ENCODE measurements at regions of chr12 and their contacts with region 1.

Region 1: DNA sequence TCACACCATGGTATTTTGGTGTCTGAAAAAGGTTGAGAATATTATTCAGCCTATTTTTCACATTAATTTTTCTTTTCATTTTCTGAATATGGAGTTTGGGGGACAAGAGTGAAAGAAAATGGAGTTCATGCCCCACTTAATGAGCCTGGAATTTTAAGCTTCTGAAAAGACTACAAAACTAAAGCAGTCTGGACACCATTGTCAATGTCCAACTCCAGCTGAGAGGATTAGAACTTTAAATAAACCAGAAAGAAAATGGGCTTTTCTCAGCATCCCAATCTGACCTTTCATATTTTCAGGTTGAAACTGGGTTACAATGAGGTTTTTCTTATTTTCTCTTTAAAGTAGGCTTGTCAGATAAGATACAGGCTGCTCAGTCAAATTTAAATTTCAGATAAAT is 207.7 kb downstream of the SLC6A15 start:
- DNase-seq: no peak
- H3K4me3 ChIP-seq: no peak overlapping the region
- H3K27ac ChIP-seq: no peak overlapping the region
- H3K4me1 ChIP-seq: no peaks in the 10 kb centered on the region
- H3K27me3 ChIP-seq: no peaks in the 10 kb centered on the region
- CTCF ChIP-seq: no peak
- POLR2A ChIP-seq: no peak

Region 2: GRCh38 chr12:84719997-84720396 is 15.1 kb after region 1 on chr12:
- CTCF ChIA-PET with region 1: interaction called, 4 read pairs
- POLR2A ChIA-PET with region 1: no interaction called
- dilution Hi-C with region 1: no loop called
- intact Hi-C with region 1: loop called (anchors 1 kb)
- DNase-seq: no peak
- H3K4me3 ChIP-seq: no peak overlapping the region
- H3K27ac ChIP-seq: no peak overlapping the region
- H3K4me1 ChIP-seq: no peaks in the 10 kb centered on the region
- H3K27me3 ChIP-seq: no peaks in the 10 kb centered on the region
- CTCF ChIP-seq: no peak
- POLR2A ChIP-seq: no peak

Measured in endothelial cell of umbilical vein (primary cell).